ENCODE measurements at regions of chr7 and their contacts with region 1.

Region 1: DNA sequence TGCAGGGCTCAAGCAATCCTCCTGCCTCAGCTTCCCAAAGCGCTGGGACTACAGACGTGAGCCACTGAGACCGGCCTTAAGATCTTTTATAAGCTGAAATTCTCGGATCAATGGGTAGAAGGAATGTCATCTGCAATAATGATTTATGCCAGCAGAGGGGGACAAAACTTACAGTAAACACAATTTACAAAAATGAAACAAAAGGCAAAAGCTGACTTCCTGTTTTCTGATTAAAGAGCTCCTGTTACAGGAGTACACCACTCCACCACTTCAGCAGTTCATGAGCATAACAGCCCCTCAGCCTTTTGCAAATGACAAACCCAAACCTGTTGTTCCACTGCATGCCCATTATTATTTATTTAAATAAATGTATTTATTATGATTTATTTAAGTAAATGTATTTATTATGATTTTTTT is 88.5 kb upstream of the ATP6V0A4 start:
- DNase-seq: peak; percentile 75
- ATAC-seq: peak; percentile 80
- H3K4me3 Mint-ChIP-seq: no peak overlapping the region
- H3K27ac Mint-ChIP-seq: peak overlapping the region; percentile 78
- H3K4me1 Mint-ChIP-seq: peaks cover 25% of the 10 kb centered on the region
- H3K27me3 Mint-ChIP-seq: no peaks in the 10 kb centered on the region

Region 2: DNA sequence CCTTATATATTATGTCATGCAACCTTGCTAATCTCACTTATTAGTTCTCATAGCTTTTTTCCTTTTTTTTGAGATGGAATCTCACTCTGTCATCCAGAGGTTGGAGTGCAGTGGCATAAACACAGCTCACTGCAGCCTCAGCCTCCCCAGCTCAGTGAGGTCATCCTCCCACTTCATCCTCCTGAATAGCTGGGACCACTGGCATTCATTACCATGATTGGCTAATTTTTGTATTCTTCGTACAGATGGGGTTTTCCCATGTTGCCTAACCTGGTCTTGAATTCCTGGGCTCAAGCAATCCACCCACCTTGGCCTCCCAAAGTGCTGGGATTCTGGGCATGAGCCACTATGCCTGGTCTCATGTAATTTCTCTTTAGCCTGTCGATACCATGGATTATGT is 515.6 kb before region 1 on chr7:
- CTCF ChIA-PET with region 1: no interaction called
- POLR2A ChIA-PET with region 1: no interaction called
- DNase-seq: no peak
- ATAC-seq: no peak
- H3K4me3 Mint-ChIP-seq: no peak overlapping the region
- H3K27ac Mint-ChIP-seq: no peak overlapping the region
- H3K4me1 Mint-ChIP-seq: no peaks in the 10 kb centered on the region
- H3K27me3 Mint-ChIP-seq: no peaks in the 10 kb centered on the region

Region 3: GRCh38 chr7:138875794-138876193 is 10.7 kb before region 1 on chr7:
- CTCF ChIA-PET with region 1: interaction called, 56 read pairs
- POLR2A ChIA-PET with region 1: no interaction called
- DNase-seq: peak; percentile 85
- ATAC-seq: peak; percentile 98
- H3K4me3 Mint-ChIP-seq: peak overlapping the region; percentile 4
- H3K27ac Mint-ChIP-seq: peak overlapping the region; percentile 77
- H3K4me1 Mint-ChIP-seq: peaks cover 18% of the 10 kb centered on the region
- H3K27me3 Mint-ChIP-seq: no peaks in the 10 kb centered on the region

Region 4: GRCh38 chr7:138924501-138925225 is 38.2 kb after region 1 on chr7:
- CTCF ChIA-PET with region 1: interaction called, 12 read pairs
- POLR2A ChIA-PET with region 1: interaction called, 4 read pairs
- DNase-seq: no peak
- ATAC-seq: no peak
- H3K4me3 Mint-ChIP-seq: no peak overlapping the region
- H3K27ac Mint-ChIP-seq: no peak overlapping the region
- H3K4me1 Mint-ChIP-seq: peaks cover 17% of the 10 kb centered on the region
- H3K27me3 Mint-ChIP-seq: peaks cover 2% of the 10 kb centered on the region

Region 5: DNA sequence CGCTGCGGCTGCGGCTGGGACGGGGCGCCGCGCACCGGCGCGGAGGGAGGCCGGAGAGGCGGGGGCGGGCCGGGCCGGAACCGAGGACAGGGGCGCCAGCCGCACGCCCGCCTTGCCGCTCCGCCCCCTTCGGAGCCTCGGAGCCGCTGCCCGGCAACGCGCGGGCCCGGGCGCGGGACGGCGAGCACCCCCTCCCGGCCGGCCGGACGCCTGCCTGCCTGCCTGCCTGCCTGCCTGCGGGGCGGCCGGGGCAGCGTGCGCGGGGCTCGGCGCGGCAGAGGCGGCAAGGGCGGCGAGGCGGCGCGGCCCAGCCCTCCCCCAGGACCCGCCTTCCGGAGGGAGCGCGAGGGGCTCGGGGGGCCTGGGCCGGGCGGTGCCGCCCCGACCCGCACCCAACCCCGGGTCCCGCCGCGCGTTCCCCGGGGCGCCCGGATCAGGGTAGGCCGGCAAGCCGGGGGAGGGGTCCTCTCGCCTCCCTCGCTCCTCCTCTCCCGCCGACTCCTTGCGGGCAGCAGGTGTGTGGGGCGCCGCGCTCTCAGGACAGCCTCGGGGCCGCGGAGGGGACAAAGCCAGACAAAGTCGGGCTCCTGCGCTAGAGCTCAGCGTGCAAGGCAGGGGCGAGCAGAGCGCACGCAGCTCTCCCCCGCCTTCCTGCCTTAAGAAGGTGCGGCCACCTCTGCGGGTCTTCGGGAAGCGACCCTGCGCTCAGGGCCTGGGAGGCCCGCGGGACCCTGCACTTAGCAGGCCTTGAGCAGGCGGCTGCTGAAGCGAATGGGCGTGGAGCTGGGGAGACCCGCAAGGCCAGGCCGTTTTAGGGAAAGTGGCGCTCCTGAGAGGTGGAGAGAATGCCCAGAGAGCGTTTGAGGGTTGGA is 95.1 kb after region 1 on chr7 and contains the start of gene KIAA1549:
- CTCF ChIA-PET with region 1: interaction called, 56 read pairs
- POLR2A ChIA-PET with region 1: no interaction called
- DNase-seq: peak; percentile 72
- ATAC-seq: peak; percentile 87
- H3K4me3 Mint-ChIP-seq: peak within 1 kb of the TSS; percentile 87
- H3K27ac Mint-ChIP-seq: peak within 1 kb of the TSS; percentile 36
- H3K4me1 Mint-ChIP-seq: peaks cover 20% of the 10 kb centered on the region
- H3K27me3 Mint-ChIP-seq: peaks cover 47% of the 10 kb centered on the region
- total RNA-seq, gene KIAA1549: 1.2 to 1.5 TPM

Region 6: DNA sequence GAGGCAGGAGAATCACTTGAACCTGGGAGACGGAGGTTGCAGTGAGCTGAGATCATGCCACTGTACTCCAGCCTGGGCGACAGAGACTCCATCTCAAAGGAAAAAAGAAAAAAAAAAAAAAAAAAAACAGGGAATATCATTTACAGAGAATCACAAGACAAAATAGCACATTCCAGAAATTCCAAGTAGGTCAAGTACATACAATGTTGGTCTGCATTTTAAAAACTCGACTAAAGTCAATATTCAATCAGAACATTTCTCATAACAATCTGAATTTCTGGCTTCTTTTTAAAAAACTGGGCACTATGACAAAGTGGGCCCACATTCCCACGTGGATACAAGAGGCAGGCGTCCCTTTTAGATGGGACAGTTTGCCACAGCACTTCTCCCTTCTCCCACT is 136.6 kb after region 1 on chr7:
- CTCF ChIA-PET with region 1: interaction called, 20 read pairs
- POLR2A ChIA-PET with region 1: no interaction called
- DNase-seq: no peak
- ATAC-seq: no peak
- H3K4me3 Mint-ChIP-seq: no peak overlapping the region
- H3K27ac Mint-ChIP-seq: no peak overlapping the region
- H3K4me1 Mint-ChIP-seq: peaks cover 4% of the 10 kb centered on the region
- H3K27me3 Mint-ChIP-seq: no peaks in the 10 kb centered on the region

Region 7: GRCh38 chr7:139068544-139069399 is 182.3 kb after region 1 on chr7:
- CTCF ChIA-PET with region 1: interaction called, 14 read pairs
- POLR2A ChIA-PET with region 1: no interaction called
- DNase-seq: peak; percentile 48
- ATAC-seq: peak; percentile 22
- H3K4me3 Mint-ChIP-seq: no peak overlapping the region
- H3K27ac Mint-ChIP-seq: peak overlapping the region; percentile 58
- H3K4me1 Mint-ChIP-seq: peaks cover 57% of the 10 kb centered on the region
- H3K27me3 Mint-ChIP-seq: no peaks in the 10 kb centered on the region

Region 8: DNA sequence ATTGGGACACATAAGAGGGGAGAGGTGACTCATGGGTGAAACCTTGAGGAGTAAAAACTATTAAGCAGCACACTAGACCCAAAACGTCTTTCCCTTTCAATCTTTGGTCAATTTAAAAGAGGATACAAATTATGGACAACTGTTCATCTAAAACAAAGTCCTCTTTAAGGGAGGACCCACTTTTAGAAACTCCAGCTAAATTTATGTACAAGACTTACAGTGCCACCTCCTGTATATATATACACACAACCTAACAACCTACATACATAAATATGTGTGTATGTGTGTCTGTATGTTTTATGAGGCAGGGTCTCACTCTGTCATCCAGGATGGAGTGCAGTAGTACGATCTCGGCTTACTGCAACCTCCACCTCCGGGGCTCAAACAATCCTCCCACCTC is 241.1 kb after region 1 on chr7:
- CTCF ChIA-PET with region 1: interaction called, 12 read pairs
- POLR2A ChIA-PET with region 1: no interaction called
- DNase-seq: no peak
- ATAC-seq: no peak
- H3K4me3 Mint-ChIP-seq: no peak overlapping the region
- H3K27ac Mint-ChIP-seq: no peak overlapping the region
- H3K4me1 Mint-ChIP-seq: peaks cover 26% of the 10 kb centered on the region
- H3K27me3 Mint-ChIP-seq: peaks cover 5% of the 10 kb centered on the region

Measured in activated CD8-positive, alpha-beta T cell treated with anti-CD3 and anti-CD28 coated beads, Interleukin-2, amount 10 ng/mL, durations not matched to agents 7 days and 5 days (primary cell).